Aorta (tissue), 5 donors: ENCODE measurements at regions of chr14 and their contacts with region 1.

Region 1: DNA sequence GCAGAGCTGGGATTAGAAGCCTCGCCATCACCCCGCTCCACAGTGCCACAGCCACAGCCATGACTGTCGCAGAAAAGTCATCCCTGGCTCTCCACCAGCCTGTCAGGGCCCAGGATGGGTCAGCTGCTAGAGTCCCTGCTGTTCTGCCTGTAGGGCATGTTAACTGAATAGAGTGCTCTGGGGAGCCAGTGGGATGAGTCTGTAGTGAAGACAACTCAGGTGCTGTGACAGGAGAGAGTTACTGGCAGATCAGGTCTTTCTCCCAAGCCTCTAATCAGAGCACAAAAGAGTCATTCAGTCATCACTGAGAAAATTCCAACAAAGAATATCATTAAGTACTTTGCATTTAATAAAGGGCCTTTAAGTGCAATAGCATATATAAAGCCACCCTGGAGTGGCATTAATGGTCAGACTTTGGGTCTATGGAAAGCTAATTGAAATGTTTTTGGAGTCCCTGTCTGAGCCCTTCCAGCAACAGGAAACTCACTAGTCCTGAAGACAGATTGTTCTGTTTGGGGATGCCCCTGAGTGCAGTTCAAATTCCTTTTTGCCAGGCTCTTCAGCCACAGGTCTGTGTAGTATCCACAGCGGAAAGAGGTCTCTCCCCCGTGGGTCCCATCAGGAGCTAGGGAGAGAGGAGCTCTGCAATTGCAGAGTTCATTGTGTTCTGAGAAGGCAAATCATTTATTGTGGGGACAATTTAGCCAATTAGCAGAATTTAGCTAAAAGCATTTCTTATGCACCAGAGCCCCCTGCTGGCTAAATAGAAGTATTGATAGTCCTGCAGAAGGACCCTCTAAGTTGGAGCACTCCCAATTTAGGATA is 45.2 kb upstream of the C14orf132 start:
- DNase-seq: no peak
- ATAC-seq: no peak
- H3K4me3 ChIP-seq: no peak overlapping the region
- H3K27ac ChIP-seq: no peak overlapping the region
- H3K4me1 ChIP-seq: no peaks in the 10 kb centered on the region
- H3K27me3 ChIP-seq: peaks cover 0 to 4% of the 10 kb centered on the region in 2 donors

Region 2: DNA sequence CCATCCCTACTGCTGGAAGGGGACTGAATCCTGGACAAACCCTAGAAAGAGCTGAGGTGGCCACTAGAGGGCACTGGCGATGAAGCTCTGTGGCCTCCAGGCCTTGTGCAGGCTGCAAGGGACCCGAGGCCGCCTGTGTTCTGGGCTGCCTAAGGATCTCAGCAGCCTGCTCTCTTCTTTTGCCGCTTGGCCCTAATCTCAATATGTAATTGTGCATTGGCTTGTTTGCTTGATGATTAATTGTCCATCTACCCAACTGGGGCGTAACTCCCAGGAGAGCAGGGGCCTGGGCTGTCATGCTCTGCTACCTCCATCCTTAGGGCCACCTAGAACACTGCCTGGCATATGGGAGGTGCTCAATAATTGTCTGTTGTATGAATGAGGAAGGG is 551.4 kb before region 1 on chr14:
- intact Hi-C with region 1: loop called in 1 of 2 experiments (anchors 10 kb)
- DNase-seq: peak; percentile 90 to 92
- ATAC-seq: peak; percentile 93
- H3K4me3 ChIP-seq: no peak overlapping the region
- H3K27ac ChIP-seq: no peak overlapping the region
- H3K4me1 ChIP-seq: no peaks in the 10 kb centered on the region
- H3K27me3 ChIP-seq: no peaks in the 10 kb centered on the region

Region 3: GRCh38 chr14:95561001-95561412 is 433.0 kb before region 1 on chr14:
- intact Hi-C with region 1: loop called (anchors 1 to 2 kb)
- DNase-seq: peak; percentile 82 to 92
- ATAC-seq: peak; percentile 85
- H3K4me3 ChIP-seq: no peak overlapping the region
- H3K27ac ChIP-seq: no peak overlapping the region
- H3K4me1 ChIP-seq: no peaks in the 10 kb centered on the region
- H3K27me3 ChIP-seq: no peaks in the 10 kb centered on the region

Region 4: GRCh38 chr14:95614349-95614748 is 379.6 kb before region 1 on chr14:
- intact Hi-C with region 1: loop called in 1 of 2 experiments (anchors 5 kb)
- DNase-seq: no peak
- ATAC-seq: no peak
- H3K4me3 ChIP-seq: no peak overlapping the region
- H3K27ac ChIP-seq: no peak overlapping the region
- H3K4me1 ChIP-seq: no peaks in the 10 kb centered on the region
- H3K27me3 ChIP-seq: no peaks in the 10 kb centered on the region

Region 5: GRCh38 chr14:95774265-95775160 is 219.5 kb before region 1 on chr14:
- intact Hi-C with region 1: loop called in 1 of 2 experiments (anchors 10 kb)
- DNase-seq: no peak
- ATAC-seq: no peak
- H3K4me3 ChIP-seq: no peak overlapping the region
- H3K27ac ChIP-seq: no peak overlapping the region
- H3K4me1 ChIP-seq: no peaks in the 10 kb centered on the region
- H3K27me3 ChIP-seq: no peaks in the 10 kb centered on the region

Region 6: DNA sequence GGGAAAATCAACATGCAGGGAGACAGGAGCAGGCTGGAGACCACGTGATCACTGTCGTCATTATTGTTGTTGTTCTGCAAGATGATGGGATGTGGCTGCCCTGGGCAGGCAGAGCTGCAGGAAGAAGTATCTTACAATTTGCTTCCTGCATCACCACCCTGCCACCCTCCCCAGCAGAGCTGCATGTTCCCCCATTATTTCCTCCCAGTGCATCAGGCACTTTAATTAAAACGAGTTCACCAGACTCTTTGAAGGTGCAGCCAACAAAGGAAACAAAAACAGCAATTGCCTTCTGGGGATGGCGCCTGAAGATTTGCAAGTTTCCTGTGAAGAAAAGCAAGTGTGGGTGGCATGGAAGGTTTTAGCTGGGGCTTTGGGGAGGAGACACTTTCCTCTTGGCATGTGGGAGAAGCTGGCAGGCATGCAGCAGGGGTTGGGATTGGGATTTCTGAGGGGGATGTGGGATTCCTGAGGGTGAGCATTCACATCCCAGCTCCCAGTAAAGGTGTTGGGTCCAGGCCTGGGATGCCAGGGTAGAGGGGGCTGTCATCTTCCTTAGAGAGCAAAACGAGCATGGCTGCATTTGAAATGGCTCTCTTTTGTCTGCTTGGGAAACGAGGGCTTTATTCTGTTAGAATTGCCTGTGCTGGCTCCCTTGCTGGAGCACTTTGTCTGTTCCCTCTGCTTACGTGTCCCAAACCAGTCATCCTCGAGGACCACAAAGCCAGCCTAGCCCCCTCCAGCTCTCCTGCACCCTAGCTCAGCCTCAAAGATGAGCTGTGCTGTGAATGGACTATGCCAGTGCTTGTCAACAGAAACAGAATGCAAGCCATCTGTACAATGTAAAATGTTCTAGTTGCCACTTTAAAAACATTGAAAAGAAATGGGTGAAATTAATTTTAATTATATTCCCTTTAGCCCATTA is 33.7 kb after region 1 on chr14:
- intact Hi-C with region 1: no loop called
- DNase-seq: no peak
- ATAC-seq: no peak
- H3K4me3 ChIP-seq: no peak overlapping the region
- H3K27ac ChIP-seq: no peak overlapping the region
- H3K4me1 ChIP-seq: no peaks in the 10 kb centered on the region
- H3K27me3 ChIP-seq: no peaks in the 10 kb centered on the region

Region 7: DNA sequence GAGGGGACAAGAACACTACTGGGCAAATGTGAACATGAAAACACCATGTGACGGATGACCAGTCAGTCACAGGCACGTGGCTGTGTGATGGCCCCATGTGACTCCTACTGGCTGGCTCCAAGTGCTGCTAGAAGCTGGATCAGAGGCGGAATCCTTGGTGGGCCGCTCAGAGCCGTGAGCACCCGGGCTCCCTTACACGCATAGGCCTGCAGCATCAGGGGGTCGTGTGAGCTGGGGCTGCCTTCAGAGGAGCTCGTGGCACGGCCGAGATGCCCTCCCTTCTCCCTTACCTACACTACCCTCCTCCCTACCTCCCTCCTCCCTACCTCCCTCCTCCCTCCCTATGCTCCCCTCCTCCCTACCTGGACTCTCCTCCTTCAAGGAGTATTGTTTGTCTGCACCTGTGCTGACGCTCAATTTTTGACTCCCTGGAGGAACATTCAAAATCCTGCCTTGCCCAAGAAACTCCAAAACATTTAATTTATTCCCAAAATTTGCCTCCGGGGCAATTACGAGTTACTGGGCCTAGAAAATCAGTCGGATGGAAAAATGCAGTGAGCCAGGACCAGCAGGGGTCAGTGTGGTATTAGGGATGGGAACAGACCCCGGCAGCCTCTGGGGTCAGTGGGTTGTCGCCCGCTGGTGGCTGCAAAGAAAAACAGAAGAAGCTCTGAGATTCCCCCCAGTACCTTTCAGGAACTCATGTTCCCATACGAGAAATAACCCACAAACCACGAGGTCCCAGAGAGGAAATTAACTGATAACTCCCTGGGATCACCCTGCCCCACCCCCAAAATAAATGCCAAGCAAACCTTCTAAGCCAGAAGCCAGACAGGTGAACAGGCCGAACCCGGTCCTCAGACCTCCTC is 106.4 kb after region 1 on chr14:
- intact Hi-C with region 1: loop called (anchors 1 to 2 kb)
- DNase-seq: peak; percentile 75 to 90
- ATAC-seq: peak; percentile 65
- H3K4me3 ChIP-seq: no peak overlapping the region
- H3K27ac ChIP-seq: no peak overlapping the region
- H3K4me1 ChIP-seq: no peaks in the 10 kb centered on the region
- H3K27me3 ChIP-seq: no peaks in the 10 kb centered on the region

Region 8: DNA sequence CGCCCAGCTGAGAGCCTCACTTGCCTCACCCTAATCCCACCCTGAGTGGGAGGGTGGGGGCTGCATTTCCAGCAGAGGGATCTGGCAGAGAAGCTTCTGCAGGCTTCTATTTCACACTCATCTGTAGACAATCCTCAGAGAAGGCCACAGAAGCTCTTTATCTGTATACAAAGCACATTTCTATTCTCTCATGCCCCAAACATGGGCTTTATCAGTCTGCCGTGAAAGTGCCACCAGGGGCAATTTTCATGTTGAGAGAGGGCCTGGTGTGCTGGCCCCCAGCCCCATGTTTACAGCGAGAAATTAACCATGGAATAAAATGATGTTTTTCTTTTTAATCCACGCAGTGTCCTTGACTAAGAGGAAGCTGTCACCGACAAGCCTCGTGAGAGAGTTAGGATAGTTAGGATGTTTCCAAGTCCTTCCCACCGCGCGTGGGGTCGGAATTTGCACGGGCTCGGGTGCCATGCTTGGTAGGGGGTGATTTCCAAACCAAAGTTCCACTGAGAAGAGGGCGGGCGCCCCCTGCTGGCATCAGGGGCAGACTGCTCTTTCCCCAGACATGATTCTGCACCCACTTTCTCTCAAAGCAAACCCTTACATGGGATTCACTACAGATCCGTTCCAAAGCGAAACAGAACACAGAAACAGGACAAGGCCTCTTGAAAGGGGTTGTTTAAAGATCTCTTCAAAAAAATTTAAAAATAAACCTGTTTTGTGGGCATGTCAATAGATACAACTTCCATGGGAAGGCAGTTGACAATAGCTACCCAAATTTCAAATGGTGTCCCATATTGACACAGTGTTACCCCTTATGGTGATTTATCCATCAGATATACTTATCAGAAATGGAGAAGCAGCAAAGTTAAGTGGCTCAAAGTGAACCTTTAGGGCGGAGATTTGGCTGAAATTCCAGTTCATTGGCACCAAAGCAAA is 281.5 kb after region 1 on chr14:
- intact Hi-C with region 1: loop called in 1 of 2 experiments (anchors 5 kb)
- DNase-seq: peak; percentile 72 to 93
- ATAC-seq: peak; percentile 73
- H3K4me3 ChIP-seq: no peak overlapping the region
- H3K27ac ChIP-seq: no peak overlapping the region
- H3K4me1 ChIP-seq: no peaks in the 10 kb centered on the region
- H3K27me3 ChIP-seq: no peaks in the 10 kb centered on the region